Sigmoid colon (tissue), 7 donors: ENCODE measurements at regions of chr4 and their contacts with region 1.

Region 1: DNA sequence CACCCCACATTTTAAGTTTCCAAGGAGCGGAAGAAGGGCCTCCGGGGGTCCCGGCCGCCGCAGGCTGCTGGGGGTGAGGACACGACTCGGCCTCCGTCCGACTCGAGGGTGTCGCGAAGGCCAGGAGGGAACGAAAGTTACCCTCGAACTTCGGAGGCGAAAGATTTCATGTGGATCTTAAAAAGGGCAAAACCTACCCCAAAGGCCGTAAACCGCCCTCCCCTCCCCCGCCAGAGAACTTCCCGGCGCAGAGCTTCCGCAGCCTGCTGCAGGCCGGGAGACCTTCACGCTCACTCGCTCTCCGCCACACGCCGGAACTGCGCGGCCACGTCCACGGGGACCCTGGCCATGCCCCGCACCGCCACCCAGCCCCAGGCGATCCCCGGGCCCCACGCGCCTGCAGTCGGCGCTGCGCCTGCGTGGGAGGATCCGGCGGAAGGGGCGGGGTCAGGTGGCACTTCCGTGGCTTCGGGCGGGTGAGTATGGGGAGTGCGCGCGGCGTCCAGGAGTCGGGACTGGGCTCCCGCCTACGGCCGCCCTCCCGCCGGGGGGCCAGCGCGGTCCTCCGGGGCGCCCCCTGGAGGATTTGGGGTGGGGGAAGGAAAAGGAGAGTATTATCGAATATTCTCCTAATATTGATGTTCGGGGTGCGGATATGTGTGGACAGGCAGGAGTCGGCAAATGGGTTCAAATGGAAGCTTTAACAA is at the start of gene MMAA:
- DNase-seq: peak; percentile 97
- H3K4me3 ChIP-seq: peak within 1 kb of the TSS; percentile 71 to 89 (median 87)
- H3K27ac ChIP-seq: peak within 1 kb of the TSS; percentile 94 to 98 (median 96)
- H3K4me1 ChIP-seq: peaks cover 0 to 27% (median 12%) of the 10 kb centered on the region in 4 donors
- H3K27me3 ChIP-seq: no peaks in the 10 kb centered on the region
- CTCF ChIP-seq: peak; percentile 13 to 53 (median 48)
- EP300 ChIP-seq: peak in 1 of 4 donors; percentile 13
- POLR2A ChIP-seq: peak; percentile 94
- total RNA-seq, gene MMAA: 2.5 to 6.6 (median 2.7) TPM

Region 2: GRCh38 chr4:145097821-145098674 is 521.0 kb before region 1 on chr4 and contains the starts of genes ABCE1 and ANAPC10:
- intact Hi-C with region 1: loop called (anchors 10 kb)
- DNase-seq: peak; percentile 98
- H3K4me3 ChIP-seq: peak within 1 kb of the TSS; percentile 69 to 85 (median 78)
- H3K27ac ChIP-seq: peak within 1 kb of the TSS; percentile 86 to 94 (median 92)
- H3K4me1 ChIP-seq: peaks cover 0 to 53% (median 41%) of the 10 kb centered on the region in 4 donors
- H3K27me3 ChIP-seq: no peaks in the 10 kb centered on the region
- CTCF ChIP-seq: no peak
- EP300 ChIP-seq: peak in 1 of 4 donors; percentile 24
- POLR2A ChIP-seq: peak; percentile 28 to 32
- total RNA-seq, gene ABCE1: 41.4 to 58.2 (median 50.4) TPM
- total RNA-seq, gene ANAPC10: 16.3 to 31.4 (median 22.9) TPM

Region 3: DNA sequence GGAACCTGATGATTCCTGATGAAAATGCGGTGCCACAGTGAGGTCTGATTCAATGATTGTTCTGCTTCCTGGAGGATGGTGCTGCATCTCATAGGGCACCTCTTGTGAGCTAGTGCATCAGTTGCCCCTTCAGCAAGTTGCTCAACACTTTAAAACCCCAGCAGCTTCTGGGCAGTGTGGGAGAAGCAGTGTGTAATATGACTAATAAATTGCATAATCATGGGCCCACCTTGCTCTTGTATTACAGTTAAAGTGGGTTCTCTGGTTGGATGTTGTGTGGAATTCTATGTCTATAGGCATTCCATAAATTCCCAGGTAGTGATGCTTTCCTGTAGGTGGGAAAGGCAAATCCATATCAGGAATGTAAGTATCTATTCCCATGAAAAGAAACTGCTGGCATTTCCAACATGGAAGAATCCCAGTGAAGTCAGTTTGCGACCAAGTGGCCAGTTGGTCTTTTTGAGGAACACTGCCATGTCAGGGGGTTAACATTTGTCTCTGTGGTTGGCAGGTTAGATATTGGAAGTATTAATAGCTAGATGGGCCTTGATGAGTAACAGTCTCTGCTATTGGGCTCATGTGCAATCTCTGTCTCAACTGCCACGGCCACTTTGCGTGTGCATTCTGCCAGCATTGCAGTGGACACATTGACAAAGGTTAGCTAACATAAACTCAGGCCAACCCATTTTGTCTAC is 317.6 kb before region 1 on chr4:
- intact Hi-C with region 1: no loop called
- DNase-seq: no peak
- H3K4me3 ChIP-seq: no peak overlapping the region
- H3K27ac ChIP-seq: no peak overlapping the region
- H3K4me1 ChIP-seq: peaks cover 0 to 5% (median 2%) of the 10 kb centered on the region in 4 donors
- H3K27me3 ChIP-seq: no peaks in the 10 kb centered on the region
- CTCF ChIP-seq: no peak
- EP300 ChIP-seq: no peak
- POLR2A ChIP-seq: no peak

Region 4: GRCh38 chr4:145481164-145481941 is 137.7 kb before region 1 on chr4 and contains the start of gene SMAD1:
- intact Hi-C with region 1: loop called (anchors 2 kb)
- DNase-seq: peak; percentile 90
- H3K4me3 ChIP-seq: peak within 1 kb of the TSS; percentile 82 to 97 (median 91)
- H3K27ac ChIP-seq: peak within 1 kb of the TSS; percentile 97 to 99 (median 98)
- H3K4me1 ChIP-seq: peaks cover 0 to 33% (median 20%) of the 10 kb centered on the region in 4 donors
- H3K27me3 ChIP-seq: no peaks in the 10 kb centered on the region
- CTCF ChIP-seq: no peak
- EP300 ChIP-seq: no peak
- POLR2A ChIP-seq: no peak
- total RNA-seq, gene SMAD1: 25.8 to 45.7 (median 33.4) TPM

Region 5: GRCh38 chr4:145663194-145663593 is 44.1 kb after region 1 on chr4:
- intact Hi-C with region 1: no loop called
- DNase-seq: no peak
- H3K4me3 ChIP-seq: no peak overlapping the region
- H3K27ac ChIP-seq: no peak overlapping the region
- H3K4me1 ChIP-seq: no peaks in the 10 kb centered on the region
- H3K27me3 ChIP-seq: no peaks in the 10 kb centered on the region
- CTCF ChIP-seq: no peak
- EP300 ChIP-seq: no peak
- POLR2A ChIP-seq: no peak

Region 6: GRCh38 chr4:145773581-145774234 is 154.6 kb after region 1 on chr4:
- intact Hi-C with region 1: loop called (anchors 2 kb)
- DNase-seq: peak; percentile 90
- H3K4me3 ChIP-seq: no peak overlapping the region
- H3K27ac ChIP-seq: peak overlapping the region; percentile 53 to 83 (median 72)
- H3K4me1 ChIP-seq: peaks cover 0 to 20% (median 14%) of the 10 kb centered on the region in 4 donors
- H3K27me3 ChIP-seq: no peaks in the 10 kb centered on the region
- CTCF ChIP-seq: no peak
- EP300 ChIP-seq: peak in 3 of 4 donors; percentile 45 to 85 (median 59)
- POLR2A ChIP-seq: no peak

Region 7: DNA sequence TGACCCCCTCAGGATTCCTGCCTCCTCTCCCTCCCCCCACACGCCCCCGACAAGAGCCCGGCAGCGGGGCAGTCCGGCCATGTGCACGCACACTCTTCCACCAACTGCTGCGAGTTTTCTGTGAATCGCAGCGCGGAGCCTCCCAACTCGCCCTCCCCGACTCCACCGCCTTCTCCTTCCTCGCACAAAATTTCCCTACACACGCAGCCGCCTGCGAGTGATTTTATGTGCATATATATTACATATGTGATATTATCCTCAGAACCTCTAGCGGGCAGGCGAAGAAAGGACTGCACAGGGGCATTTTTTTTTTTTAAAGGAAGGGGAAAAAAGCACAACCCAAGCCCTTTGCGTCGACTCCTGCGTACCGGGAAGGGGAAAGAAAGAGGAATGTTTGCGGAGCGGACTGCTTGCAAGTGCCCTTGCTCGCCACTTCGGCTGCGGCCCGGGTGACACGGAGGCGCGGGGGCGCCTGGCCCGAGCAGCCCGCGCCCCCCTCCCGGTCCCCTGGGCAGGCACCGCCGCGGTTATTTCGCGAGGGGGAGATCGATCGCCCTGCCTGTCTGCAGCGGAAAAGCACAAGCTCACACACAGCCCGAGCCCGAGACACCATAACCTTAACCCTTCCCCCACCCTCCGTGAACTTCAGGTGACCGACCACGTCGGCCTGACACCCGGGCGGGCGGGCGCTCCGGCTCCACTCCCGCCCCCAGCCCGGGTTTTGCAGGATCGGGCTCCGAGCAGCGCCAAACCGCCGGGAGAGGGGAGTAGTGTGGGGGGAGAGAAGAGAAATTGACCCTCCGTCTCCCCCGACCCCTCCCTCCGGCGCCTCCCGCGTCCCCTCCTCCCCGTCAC is 317.3 kb after region 1 on chr4:
- intact Hi-C with region 1: loop called (anchors 1 kb)
- DNase-seq: peak; percentile 85
- H3K4me3 ChIP-seq: peak overlapping the region; percentile 80 to 91 (median 84)
- H3K27ac ChIP-seq: peak overlapping the region; percentile 92 to 98 (median 94)
- H3K4me1 ChIP-seq: peaks cover 0 to 36% (median 19%) of the 10 kb centered on the region in 4 donors
- H3K27me3 ChIP-seq: no peaks in the 10 kb centered on the region
- CTCF ChIP-seq: peak in 3 of 4 experiments; percentile 18 to 28 (median 25)
- EP300 ChIP-seq: no peak
- POLR2A ChIP-seq: no peak

Region 8: GRCh38 chr4:146191766-146192458 is 572.8 kb after region 1 on chr4:
- intact Hi-C with region 1: no loop called
- DNase-seq: no peak
- H3K4me3 ChIP-seq: no peak overlapping the region
- H3K27ac ChIP-seq: no peak overlapping the region
- H3K4me1 ChIP-seq: peaks cover 0 to 15% (median 11%) of the 10 kb centered on the region in 4 donors
- H3K27me3 ChIP-seq: no peaks in the 10 kb centered on the region
- CTCF ChIP-seq: no peak
- EP300 ChIP-seq: no peak
- POLR2A ChIP-seq: no peak